Activated CD4-positive, alpha-beta memory T cell treated with anti-CD3 and anti-CD28 coated beads for 36 hours (primary cell): ENCODE measurements at regions of chr4 and their contacts with region 1.

Region 1: GRCh38 chr4:100093091-100093866 is 97.0 kb downstream of the DDIT4L start:
- DNase-seq: peak; percentile 93
- H3K4me3 Mint-ChIP-seq: no peak overlapping the region
- H3K27ac Mint-ChIP-seq: peak overlapping the region; percentile 36
- H3K4me1 Mint-ChIP-seq: peaks cover 39% of the 10 kb centered on the region
- H3K27me3 Mint-ChIP-seq: no peaks in the 10 kb centered on the region

Region 2: DNA sequence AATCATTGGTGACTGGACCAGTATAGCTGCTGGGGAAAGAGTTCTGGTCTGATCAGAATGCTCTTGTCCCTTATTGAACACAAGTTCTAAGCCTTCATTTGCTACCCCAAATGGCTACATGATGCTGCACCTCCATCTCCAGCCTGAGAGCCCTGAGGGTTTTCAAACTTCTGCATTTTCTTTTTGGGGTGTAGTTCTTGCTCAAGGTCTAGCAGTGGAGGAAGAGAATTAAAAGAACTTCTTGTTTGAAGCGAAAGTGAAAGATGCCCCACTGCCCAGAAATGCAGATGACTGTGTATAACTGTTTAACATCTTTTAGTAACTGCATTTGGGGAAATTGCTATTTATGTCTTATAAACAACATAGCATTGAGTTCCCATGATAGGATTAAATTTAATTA is 237.6 kb before region 1 on chr4:
- CTCF ChIA-PET with region 1: no interaction called
- POLR2A ChIA-PET with region 1: no interaction called
- intact Hi-C with region 1: no loop called
- DNase-seq: peak; percentile 37
- H3K4me3 Mint-ChIP-seq: no peak overlapping the region
- H3K27ac Mint-ChIP-seq: peak overlapping the region; percentile 7
- H3K4me1 Mint-ChIP-seq: peaks cover 70% of the 10 kb centered on the region
- H3K27me3 Mint-ChIP-seq: no peaks in the 10 kb centered on the region

Region 3: GRCh38 chr4:99915449-99915848 is 177.8 kb before region 1 on chr4:
- CTCF ChIA-PET with region 1: no interaction called
- POLR2A ChIA-PET with region 1: no interaction called
- intact Hi-C with region 1: no loop called
- DNase-seq: no peak
- H3K4me3 Mint-ChIP-seq: no peak overlapping the region
- H3K27ac Mint-ChIP-seq: no peak overlapping the region
- H3K4me1 Mint-ChIP-seq: peaks cover 3% of the 10 kb centered on the region
- H3K27me3 Mint-ChIP-seq: no peaks in the 10 kb centered on the region

Region 4: DNA sequence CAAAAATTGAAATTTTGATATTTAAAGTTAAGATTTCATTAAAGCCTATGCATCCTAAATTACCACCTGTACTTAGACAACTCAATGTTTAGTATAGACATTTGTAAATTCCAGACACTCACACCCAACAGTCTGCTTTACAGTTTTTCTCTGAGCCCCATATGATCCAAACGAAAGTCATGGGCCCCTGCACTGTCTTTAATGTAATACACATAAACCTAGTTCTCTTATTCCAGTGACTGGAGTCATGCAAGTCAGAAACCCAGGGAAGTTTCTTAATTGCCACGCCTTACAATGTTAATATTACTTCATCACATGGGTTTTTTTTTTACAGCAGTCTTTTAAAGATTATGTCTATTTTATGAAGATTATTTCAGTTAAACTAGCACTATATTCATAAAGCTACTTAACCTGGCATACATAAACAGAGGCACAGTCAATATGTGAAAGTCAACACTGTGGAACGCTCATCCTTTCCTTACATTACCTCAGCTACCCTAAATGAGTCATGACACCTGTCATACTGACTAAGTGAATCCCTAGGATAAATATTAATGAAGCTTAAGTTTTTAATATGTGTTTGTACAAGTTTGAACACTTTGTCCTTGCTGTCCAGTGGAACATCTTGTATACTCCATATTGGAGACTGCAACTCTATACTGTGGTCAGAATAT is 75.5 kb before region 1 on chr4:
- CTCF ChIA-PET with region 1: no interaction called
- POLR2A ChIA-PET with region 1: no interaction called
- intact Hi-C with region 1: loop called (anchors 5 kb)
- DNase-seq: no peak
- H3K4me3 Mint-ChIP-seq: no peak overlapping the region
- H3K27ac Mint-ChIP-seq: no peak overlapping the region
- H3K4me1 Mint-ChIP-seq: peaks cover 10% of the 10 kb centered on the region
- H3K27me3 Mint-ChIP-seq: peaks cover 8% of the 10 kb centered on the region

Region 5: GRCh38 chr4:100189820-100190642 is 96.8 kb after region 1 on chr4 and contains the start of gene DDIT4L:
- CTCF ChIA-PET with region 1: interaction called, 4 read pairs
- POLR2A ChIA-PET with region 1: no interaction called
- intact Hi-C with region 1: loop called (anchors 5 kb)
- DNase-seq: peak; percentile 14
- H3K4me3 Mint-ChIP-seq: peak within 1 kb of the TSS; percentile 70
- H3K27ac Mint-ChIP-seq: no peak within 1 kb of the TSS
- H3K4me1 Mint-ChIP-seq: peaks cover 15% of the 10 kb centered on the region
- H3K27me3 Mint-ChIP-seq: peaks cover 42% of the 10 kb centered on the region
- total RNA-seq, gene DDIT4L: 0.24 to 0.34 TPM

Region 6: GRCh38 chr4:100489316-100489715 is 396.0 kb after region 1 on chr4:
- CTCF ChIA-PET with region 1: no interaction called
- POLR2A ChIA-PET with region 1: no interaction called
- intact Hi-C with region 1: no loop called
- DNase-seq: no peak
- H3K4me3 Mint-ChIP-seq: no peak overlapping the region
- H3K27ac Mint-ChIP-seq: no peak overlapping the region
- H3K4me1 Mint-ChIP-seq: no peaks in the 10 kb centered on the region
- H3K27me3 Mint-ChIP-seq: no peaks in the 10 kb centered on the region

Region 7: DNA sequence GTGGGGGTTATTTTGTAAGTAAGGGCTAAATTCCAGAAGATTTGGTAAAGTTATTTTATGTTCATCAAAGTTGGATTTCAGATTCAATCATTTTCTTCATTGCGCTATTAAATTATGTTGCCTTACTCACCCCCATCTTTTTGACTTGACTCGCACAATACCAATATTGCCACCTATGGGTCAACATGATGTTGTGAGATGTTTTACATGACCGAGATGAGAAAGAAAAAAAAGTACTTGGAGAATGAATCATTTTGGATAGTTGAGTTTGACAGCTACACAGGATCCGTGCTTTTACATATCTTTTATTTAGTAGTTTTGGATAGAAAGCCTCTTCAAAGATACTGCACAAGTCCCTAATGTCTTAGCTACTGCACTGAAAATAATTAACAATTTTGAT is 648.8 kb after region 1 on chr4:
- CTCF ChIA-PET with region 1: no interaction called
- POLR2A ChIA-PET with region 1: no interaction called
- intact Hi-C with region 1: loop called (anchors 10 kb)
- DNase-seq: no peak
- H3K4me3 Mint-ChIP-seq: no peak overlapping the region
- H3K27ac Mint-ChIP-seq: no peak overlapping the region
- H3K4me1 Mint-ChIP-seq: no peaks in the 10 kb centered on the region
- H3K27me3 Mint-ChIP-seq: peaks cover 1% of the 10 kb centered on the region

Region 8: GRCh38 chr4:101169044-101170014 is 1076.0 kb after region 1 on chr4:
- CTCF ChIA-PET with region 1: interaction called, 10 read pairs
- POLR2A ChIA-PET with region 1: no interaction called
- intact Hi-C with region 1: no loop called
- DNase-seq: peak; percentile 69
- H3K4me3 Mint-ChIP-seq: no peak overlapping the region
- H3K27ac Mint-ChIP-seq: no peak overlapping the region
- H3K4me1 Mint-ChIP-seq: peaks cover 9% of the 10 kb centered on the region
- H3K27me3 Mint-ChIP-seq: no peaks in the 10 kb centered on the region

Region 9: GRCh38 chr4:101527188-101527587 is 1433.9 kb after region 1 on chr4:
- CTCF ChIA-PET with region 1: no interaction called
- POLR2A ChIA-PET with region 1: no interaction called
- intact Hi-C with region 1: loop called (anchors 5 kb)
- DNase-seq: peak; percentile 87
- H3K4me3 Mint-ChIP-seq: peak overlapping the region; percentile 12
- H3K27ac Mint-ChIP-seq: peak overlapping the region; percentile 30
- H3K4me1 Mint-ChIP-seq: peaks cover 20% of the 10 kb centered on the region
- H3K27me3 Mint-ChIP-seq: peaks cover 38% of the 10 kb centered on the region